ENCODE measurements at regions of chr19 and their contacts with region 1.

Region 1: DNA sequence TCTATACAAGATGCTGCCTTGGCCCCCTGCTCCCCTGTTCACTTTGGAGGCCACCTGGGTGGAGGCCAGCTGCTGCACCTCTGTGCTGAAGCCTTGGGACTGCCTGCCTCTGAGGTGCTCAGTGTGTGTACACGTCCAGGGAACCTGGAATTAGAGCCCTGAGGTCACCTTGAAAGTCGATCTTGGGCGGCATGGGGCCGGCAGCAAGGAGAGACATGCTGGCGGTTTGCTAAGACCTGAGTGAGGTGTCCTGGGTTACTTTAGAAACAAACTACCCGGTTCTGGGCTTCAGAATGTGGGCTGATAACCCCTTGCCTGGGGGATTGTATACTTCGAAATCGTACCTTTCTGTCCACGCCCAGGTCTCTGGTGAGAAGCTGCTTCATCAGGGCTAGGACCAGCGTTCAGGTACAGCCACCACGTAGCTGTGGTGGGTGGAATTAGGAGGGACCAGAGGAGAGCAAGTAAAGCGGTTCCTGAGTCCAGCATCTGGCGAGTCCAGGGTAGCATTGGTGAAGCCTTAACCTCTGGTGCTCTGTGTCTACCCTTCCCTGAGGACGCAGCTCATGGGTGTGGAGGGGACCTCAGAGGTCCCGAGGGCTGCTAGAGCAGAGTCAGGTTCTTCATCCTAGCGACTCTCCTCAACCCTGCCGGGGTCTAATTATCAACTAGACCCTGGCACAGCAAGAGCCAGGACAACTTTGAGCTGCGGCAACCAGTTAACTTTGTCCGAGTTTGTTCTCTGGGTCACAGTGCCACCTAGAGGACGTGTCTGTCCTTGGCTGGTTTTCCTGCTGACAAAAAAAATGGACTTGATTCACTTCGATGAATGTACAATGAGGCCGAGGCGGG is 25.3 kb downstream of the TSSK6 start:
- DNase-seq: peak; percentile 83 to 96 (median 92)
- H3K4me3 ChIP-seq: peak overlapping the region in 2 of 3 donors; percentile 32 to 43
- H3K27ac ChIP-seq: peak overlapping the region; percentile 80 to 91
- H3K4me1 ChIP-seq: peaks cover 10 to 51% (median 40%) of the 10 kb centered on the region in 3 donors
- H3K27me3 ChIP-seq: no peaks in the 10 kb centered on the region
- CTCF ChIP-seq: peak; percentile 94

Region 2: DNA sequence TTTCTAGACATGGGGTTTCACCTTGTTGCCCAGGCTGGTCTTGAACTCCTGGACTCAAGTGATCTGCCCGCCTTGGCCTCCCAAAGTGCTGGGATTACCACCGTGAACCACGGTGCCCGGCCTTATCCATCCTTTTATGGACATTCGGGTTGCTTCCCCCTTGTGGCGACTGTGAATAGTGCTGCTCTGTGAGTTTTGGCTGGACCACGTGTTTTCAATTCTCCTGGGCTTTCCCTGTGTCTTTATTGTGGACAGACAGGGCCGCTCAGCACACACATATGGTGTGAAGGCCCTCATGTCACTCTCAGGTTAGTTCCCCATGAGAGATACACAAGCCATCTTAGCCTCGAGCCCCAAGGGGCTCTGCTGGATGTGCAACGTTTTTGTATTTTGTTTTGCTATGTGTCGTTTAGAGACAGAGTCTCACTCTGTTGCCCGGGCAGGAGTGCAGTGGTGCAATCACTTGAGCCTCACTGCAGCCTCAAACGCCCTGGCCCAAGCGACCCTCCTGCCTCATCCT is 128.9 kb before region 1 on chr19:
- intact Hi-C with region 1: loop called (anchors 10 kb)
- DNase-seq: peak; percentile 78 to 90 (median 85)
- H3K4me3 ChIP-seq: no peak overlapping the region
- H3K27ac ChIP-seq: no peak overlapping the region
- H3K4me1 ChIP-seq: peaks cover 0 to 5% (median 0%) of the 10 kb centered on the region in 3 donors
- H3K27me3 ChIP-seq: no peaks in the 10 kb centered on the region
- CTCF ChIP-seq: peak; percentile 74

Measured in kidney (tissue), 22 donors.